ENCODE measurements at regions of chr5 and their contacts with region 1.

Region 1: DNA sequence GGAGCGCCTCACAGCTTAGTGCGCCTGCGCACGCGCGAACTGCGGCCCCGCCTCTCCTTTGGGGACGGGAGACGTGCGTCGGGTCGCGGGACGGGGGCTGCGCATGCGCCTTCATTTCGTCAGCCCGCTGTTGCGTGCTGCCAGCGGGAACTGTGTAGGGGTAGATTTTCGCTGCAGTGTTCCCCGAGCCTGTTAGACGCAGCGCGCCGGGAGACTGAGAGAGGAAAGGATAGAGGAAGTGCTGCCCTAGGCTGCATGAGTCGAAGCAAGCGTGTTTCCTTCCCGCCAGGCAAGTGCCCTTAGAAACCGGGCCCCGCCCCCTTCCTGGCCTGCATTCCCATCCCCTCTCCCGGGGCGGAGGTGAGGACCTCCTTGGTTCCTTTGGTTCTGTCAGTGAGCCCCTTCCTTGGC is 12.3 kb downstream of the ITGA1 start:
- DNase-seq: peak; percentile 88
- H3K4me3 ChIP-seq: peak overlapping the region; percentile 82
- H3K27ac ChIP-seq: peak overlapping the region; percentile 96
- H3K27me3 ChIP-seq: no peaks in the 10 kb centered on the region
- CTCF ChIP-seq: no peak

Region 2: DNA sequence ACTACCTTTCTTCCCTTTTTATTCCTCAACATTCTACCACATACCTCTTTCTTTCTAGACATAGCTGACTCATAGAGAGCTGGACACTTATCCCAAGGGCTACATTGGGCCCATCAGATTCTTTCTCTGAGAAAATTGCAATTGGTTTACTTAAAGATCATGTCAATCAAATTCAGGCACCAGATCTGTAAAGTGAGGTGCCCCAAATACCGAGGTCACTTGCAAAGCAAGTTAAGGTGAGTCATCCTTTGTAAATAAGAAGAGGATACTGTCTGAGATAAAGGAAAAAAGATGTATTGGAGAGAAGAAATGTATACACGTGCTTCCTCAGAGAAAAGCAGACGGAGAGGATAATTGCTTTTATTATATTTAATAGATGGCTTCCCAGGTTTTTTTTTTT is 375.6 kb before region 1 on chr5:
- CTCF ChIA-PET with region 1: no interaction called
- POLR2A ChIA-PET with region 1: no interaction called
- DNase-seq: no peak
- H3K4me3 ChIP-seq: no peak overlapping the region
- H3K27ac ChIP-seq: no peak overlapping the region
- H3K27me3 ChIP-seq: no peaks in the 10 kb centered on the region
- CTCF ChIP-seq: no peak

Region 3: DNA sequence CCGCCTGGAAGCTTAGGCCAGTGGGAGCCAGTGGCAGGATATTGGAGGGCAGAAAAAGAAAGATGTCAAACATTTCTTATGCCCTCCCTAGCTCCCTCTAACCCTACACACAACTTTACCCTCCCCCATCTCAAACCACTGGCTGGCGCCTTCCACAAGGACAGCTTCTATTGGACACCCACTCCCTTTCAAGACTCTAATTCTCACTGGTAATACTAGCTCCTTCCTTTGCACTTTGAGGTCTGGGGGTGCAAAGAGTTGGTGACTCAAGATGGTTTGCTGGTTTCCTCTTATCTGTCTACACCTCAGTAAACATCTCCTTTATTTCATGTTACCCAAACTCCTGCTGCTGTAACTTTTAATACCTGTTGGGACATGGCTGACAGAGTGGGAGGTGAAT is 23.9 kb before region 1 on chr5:
- CTCF ChIA-PET with region 1: no interaction called
- POLR2A ChIA-PET with region 1: no interaction called
- DNase-seq: no peak
- H3K4me3 ChIP-seq: no peak overlapping the region
- H3K27ac ChIP-seq: no peak overlapping the region
- H3K27me3 ChIP-seq: no peaks in the 10 kb centered on the region
- CTCF ChIP-seq: no peak

Region 4: GRCh38 chr5:52787600-52788504 is 12.1 kb before region 1 on chr5 and contains the starts of genes ITGA1 and PELO:
- CTCF ChIA-PET with region 1: interaction called, 8 read pairs
- POLR2A ChIA-PET with region 1: interaction called, 15 read pairs
- DNase-seq: peak; percentile 59
- H3K4me3 ChIP-seq: peak within 1 kb of the TSS; percentile 77
- H3K27ac ChIP-seq: peak within 1 kb of the TSS; percentile 72
- H3K27me3 ChIP-seq: no peaks in the 10 kb centered on the region
- CTCF ChIP-seq: peak; percentile 28
- polyA plus RNA-seq, gene ITGA1: 136 and 148 TPM in 2 replicates
- polyA plus RNA-seq, gene PELO: 49.4 TPM in 2 replicates

Region 5: GRCh38 chr5:52811067-52811749 is 11.2 kb after region 1 on chr5:
- CTCF ChIA-PET with region 1: interaction called, 4 read pairs
- POLR2A ChIA-PET with region 1: interaction called, 17 read pairs
- DNase-seq: no peak
- H3K4me3 ChIP-seq: no peak overlapping the region
- H3K27ac ChIP-seq: no peak overlapping the region
- H3K27me3 ChIP-seq: no peaks in the 10 kb centered on the region
- CTCF ChIP-seq: no peak

Region 6: GRCh38 chr5:52840277-52841050 is 40.5 kb after region 1 on chr5:
- CTCF ChIA-PET with region 1: interaction called, 3 read pairs
- POLR2A ChIA-PET with region 1: interaction called, 14 read pairs
- DNase-seq: no peak
- H3K4me3 ChIP-seq: no peak overlapping the region; the same call in 1 of the 2 replicates
- H3K27ac ChIP-seq: peak overlapping the region; percentile 62
- H3K27me3 ChIP-seq: no peaks in the 10 kb centered on the region
- CTCF ChIP-seq: no peak

Region 7: GRCh38 chr5:52864371-52864770 is 64.4 kb after region 1 on chr5:
- CTCF ChIA-PET with region 1: no interaction called
- POLR2A ChIA-PET with region 1: interaction called, 14 read pairs
- DNase-seq: peak; percentile 56
- H3K4me3 ChIP-seq: no peak overlapping the region
- H3K27ac ChIP-seq: peak overlapping the region; percentile 62
- H3K27me3 ChIP-seq: no peaks in the 10 kb centered on the region
- CTCF ChIP-seq: no peak

Region 8: GRCh38 chr5:52915176-52915875 is 115.3 kb after region 1 on chr5:
- CTCF ChIA-PET with region 1: interaction called, 21 read pairs
- POLR2A ChIA-PET with region 1: no interaction called
- DNase-seq: peak; percentile 50
- H3K4me3 ChIP-seq: peak overlapping the region; percentile 30
- H3K27ac ChIP-seq: no peak overlapping the region
- H3K27me3 ChIP-seq: no peaks in the 10 kb centered on the region
- CTCF ChIP-seq: peak; percentile 61

Region 9: DNA sequence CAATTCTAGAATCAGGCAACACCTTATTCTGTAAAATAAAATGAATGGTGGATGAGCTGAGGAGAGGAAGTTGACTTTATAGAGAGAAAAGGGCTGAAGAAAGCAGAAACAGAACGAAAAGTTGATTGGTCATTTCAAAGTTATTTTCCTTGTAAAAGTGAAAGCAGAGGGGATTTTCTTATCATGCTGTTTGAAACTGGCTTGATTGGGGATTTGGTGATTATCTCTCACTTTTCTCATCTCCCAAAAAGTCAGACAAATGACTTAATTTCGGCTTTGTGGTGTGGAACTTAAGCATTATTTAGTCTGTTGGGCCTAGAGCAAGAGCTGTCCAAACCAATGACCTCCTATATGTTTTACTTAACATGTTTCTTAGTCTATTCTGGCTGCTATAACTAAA is 128.7 kb after region 1 on chr5:
- CTCF ChIA-PET with region 1: no interaction called
- POLR2A ChIA-PET with region 1: no interaction called
- DNase-seq: no peak
- H3K4me3 ChIP-seq: no peak overlapping the region
- H3K27ac ChIP-seq: no peak overlapping the region
- H3K27me3 ChIP-seq: no peaks in the 10 kb centered on the region
- CTCF ChIP-seq: no peak

Region 10: GRCh38 chr5:53019320-53019719 is 219.3 kb after region 1 on chr5:
- CTCF ChIA-PET with region 1: no interaction called
- POLR2A ChIA-PET with region 1: no interaction called
- DNase-seq: no peak
- H3K4me3 ChIP-seq: no peak overlapping the region
- H3K27ac ChIP-seq: no peak overlapping the region
- H3K27me3 ChIP-seq: no peaks in the 10 kb centered on the region
- CTCF ChIP-seq: 0 out of 2 replicates have a peak, but pooled peaks have one; percentile 15

Measured in AG04450 (cell line).